Ovary (tissue), 10 donors: ENCODE measurements at regions of chr5 and their contacts with region 1.

Region 1: DNA sequence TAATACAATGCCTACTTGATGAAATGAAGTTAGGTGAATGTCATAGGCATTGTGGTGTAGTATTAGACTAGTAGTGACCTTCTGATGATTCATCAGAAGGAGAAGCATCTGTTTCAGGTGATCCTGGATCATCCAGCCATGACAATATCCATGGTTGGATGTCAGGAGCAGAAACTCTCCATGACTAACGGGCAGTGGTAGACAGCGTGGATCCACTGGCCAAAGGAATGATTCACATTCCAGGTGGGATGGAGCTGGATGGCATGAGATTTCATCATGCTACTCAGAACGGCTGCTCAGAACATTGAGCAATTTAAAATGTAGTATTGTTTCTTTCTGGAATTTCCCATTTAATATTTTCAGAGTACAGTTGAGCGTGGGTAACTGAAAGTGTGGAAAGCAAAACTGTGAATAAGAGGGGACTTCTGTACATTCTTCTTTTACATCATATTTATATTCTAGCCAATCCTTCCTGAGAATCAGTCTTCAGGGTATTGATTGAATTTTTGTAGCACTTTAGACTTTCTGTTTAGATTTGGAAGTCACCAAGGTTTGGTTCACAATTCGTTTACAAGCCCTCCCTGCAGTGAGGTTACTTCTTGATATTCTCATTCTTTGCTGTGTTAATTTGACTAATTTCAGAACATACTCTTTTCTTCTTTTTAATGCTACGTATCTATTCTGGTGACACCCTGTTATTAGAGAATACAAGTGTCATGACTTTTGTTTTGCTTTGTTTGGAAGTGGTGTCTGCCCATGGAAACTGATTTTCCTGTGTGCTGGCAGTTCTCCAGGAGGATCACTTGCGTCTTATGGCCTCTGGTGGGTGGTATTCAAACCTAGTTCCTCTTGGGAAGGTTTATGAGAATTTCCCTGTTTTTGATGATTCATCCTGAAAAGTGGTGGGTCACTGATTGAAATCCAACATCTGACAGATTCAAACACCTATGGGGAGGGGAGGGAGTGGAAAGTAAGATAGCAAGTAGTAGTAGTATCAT is 12.2 kb upstream of the CLINT1 start:
- DNase-seq: no peak
- H3K4me3 ChIP-seq: no peak overlapping the region
- H3K27ac ChIP-seq: no peak overlapping the region
- H3K4me1 ChIP-seq: no peaks in the 10 kb centered on the region
- H3K27me3 ChIP-seq: no peaks in the 10 kb centered on the region
- CTCF ChIP-seq: no peak
- EP300 ChIP-seq: no peak
- POLR2A ChIP-seq: no peak

Region 2: DNA sequence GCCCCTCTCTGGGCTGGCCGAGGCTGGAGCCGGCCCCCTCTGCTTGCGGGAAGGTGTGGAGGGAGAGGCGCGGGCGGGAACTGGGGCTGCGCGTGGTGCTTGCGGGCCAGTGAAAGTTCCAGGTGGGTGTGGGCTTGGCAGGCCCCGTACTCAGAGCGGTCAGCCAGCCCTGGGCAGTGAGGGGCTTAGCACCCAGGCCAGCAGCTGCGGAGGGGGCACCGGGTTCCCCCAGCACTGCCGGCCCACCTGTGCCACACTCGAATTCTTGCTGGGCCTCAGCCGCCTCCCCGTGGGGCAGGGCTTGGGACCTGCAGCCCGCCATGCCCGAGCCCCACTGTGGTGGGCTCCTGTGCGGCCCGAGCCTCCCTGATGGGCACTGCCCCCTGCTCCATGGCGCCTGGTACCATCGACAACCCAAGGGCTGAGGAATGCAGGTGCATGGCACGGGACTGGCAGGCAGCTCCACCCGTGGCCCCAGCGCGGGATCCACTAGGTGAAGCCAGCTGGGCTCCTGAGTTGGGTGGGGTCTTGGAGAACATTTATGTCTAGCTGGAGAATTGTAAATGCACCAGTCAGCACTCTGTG is 15.8 kb after region 1 on chr5:
- intact Hi-C with region 1: loop called in 1 of 4 experiments (anchors 1 kb)
- DNase-seq: no peak
- H3K4me3 ChIP-seq: no peak overlapping the region
- H3K27ac ChIP-seq: no peak overlapping the region
- H3K4me1 ChIP-seq: no peaks in the 10 kb centered on the region
- H3K27me3 ChIP-seq: no peaks in the 10 kb centered on the region
- CTCF ChIP-seq: no peak
- EP300 ChIP-seq: no peak
- POLR2A ChIP-seq: no peak